ENCODE measurements at regions of chr7 and their contacts with region 1.

Region 1: GRCh38 chr7:123865517-123866117 is 20.6 kb downstream of the HYAL4 start:
- DNase-seq: peak; percentile 43 to 80 (median 57)
- H3K4me3 ChIP-seq: no peak overlapping the region
- H3K27ac ChIP-seq: no peak overlapping the region
- H3K4me1 ChIP-seq: no peaks in the 10 kb centered on the region
- H3K27me3 ChIP-seq: no peaks in the 10 kb centered on the region
- CTCF ChIP-seq: peak; percentile 69 to 81 (median 76)
- POLR2A ChIP-seq: no peak

Region 2: DNA sequence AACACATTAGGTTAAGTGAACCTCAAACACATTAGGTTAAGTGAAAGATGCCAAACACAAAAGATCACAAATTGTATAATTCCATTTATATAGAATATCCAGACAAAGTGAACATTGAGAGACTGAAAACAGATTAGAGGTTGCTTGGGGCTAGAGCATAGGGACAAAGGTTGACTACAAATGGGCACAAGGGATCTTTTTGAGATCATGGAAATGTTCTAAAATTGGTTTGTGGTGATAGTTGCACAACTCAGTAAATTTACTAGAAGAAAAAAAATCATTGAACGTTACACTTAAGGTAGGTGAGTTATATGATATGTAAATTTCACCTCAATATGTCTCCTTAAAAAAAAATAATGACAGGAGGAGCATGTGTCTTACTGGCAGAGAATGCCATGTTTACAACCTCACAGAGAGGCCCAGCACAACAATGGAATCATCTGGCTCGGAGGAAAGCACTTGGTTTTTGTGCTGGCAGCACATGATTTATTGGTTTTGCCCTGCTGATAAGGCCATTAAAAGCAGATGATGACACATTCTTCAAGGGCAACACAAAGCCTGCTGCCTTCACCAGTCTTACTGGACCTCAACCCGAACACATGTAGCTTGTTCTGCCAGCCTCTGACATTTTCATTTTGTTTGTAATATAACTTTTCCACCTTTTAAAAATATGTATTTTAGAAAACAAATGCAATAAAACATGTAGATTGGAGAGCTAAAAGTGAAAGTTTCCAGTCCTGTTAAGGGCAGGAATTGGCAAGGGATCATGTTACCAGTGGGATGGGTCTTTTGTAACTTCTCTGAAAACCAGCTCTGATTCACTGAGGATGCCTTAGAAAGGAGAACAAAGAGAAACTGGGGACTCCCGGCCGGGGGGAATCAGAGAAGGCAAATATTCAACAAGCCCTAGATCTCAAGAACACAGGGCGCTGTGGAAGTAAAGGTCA is 221.8 kb before region 1 on chr7:
- intact Hi-C with region 1: loop called in 1 of 2 experiments (anchors 5 kb)
- DNase-seq: peak; percentile 77 to 92 (median 89)
- H3K4me3 ChIP-seq: peak overlapping the region in 2 of 4 donors; percentile 7 to 30
- H3K27ac ChIP-seq: peak overlapping the region; percentile 18 to 84 (median 71)
- H3K4me1 ChIP-seq: peaks cover 22 to 25% of the 10 kb centered on the region in 2 donors
- H3K27me3 ChIP-seq: no peaks in the 10 kb centered on the region
- CTCF ChIP-seq: no peak
- POLR2A ChIP-seq: peak in 1 of 2 donors; percentile 81

Region 3: DNA sequence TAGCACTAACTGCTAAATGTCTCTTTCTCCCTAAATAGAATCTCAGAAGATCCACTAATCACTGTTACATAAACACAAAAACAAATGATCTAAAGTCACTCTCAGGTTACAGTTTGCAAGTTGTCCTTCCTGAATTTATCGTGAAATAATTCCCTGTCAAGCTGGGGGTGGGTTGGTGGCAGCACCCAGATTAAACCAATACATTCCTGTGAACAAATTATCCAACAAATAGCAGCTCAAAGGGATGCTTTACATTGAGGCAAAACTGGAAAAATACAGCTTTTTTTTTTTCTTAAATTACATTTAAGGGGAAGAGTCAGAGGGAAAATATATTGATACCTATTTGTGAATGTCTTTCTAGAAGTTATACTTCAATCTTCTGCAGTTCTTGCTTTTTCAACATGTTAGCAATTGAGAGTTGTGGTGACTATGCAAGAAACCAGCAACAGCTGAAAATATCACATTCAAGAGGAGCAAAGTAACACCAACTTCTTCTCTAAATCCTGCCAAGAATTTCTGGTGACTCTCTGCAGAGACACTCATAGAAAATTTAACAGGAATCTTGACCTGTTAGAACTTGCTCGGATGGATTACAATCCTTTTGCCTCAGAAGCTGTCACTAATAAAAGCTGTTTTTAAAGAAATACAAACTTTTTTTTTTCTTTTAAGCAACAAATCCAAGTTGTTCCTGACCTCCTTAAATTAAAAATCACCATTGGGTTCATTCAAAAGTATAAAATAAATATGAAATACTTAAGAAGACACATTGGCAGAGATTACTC is 191.0 kb before region 1 on chr7:
- intact Hi-C with region 1: loop called in 1 of 2 experiments (anchors 10 kb)
- DNase-seq: no peak
- H3K4me3 ChIP-seq: no peak overlapping the region
- H3K27ac ChIP-seq: no peak overlapping the region
- H3K4me1 ChIP-seq: peaks cover 0 to 16% of the 10 kb centered on the region in 2 donors
- H3K27me3 ChIP-seq: no peaks in the 10 kb centered on the region
- CTCF ChIP-seq: no peak
- POLR2A ChIP-seq: no peak

Region 4: GRCh38 chr7:123682690-123683089 is 182.9 kb before region 1 on chr7:
- intact Hi-C with region 1: loop called (anchors 10 kb)
- DNase-seq: peak in 3 of 7 donors; percentile 19 to 43 (median 25)
- H3K4me3 ChIP-seq: no peak overlapping the region
- H3K27ac ChIP-seq: no peak overlapping the region
- H3K4me1 ChIP-seq: peaks cover 13 to 14% of the 10 kb centered on the region in 2 donors
- H3K27me3 ChIP-seq: no peaks in the 10 kb centered on the region
- CTCF ChIP-seq: peak; percentile 38 to 71 (median 58)
- POLR2A ChIP-seq: no peak

Region 5: GRCh38 chr7:123792547-123792946 is 73.1 kb before region 1 on chr7:
- intact Hi-C with region 1: loop called (anchors 5 kb)
- DNase-seq: no peak
- H3K4me3 ChIP-seq: no peak overlapping the region
- H3K27ac ChIP-seq: no peak overlapping the region
- H3K4me1 ChIP-seq: peaks cover 7 to 10% of the 10 kb centered on the region in 2 donors
- H3K27me3 ChIP-seq: no peaks in the 10 kb centered on the region
- CTCF ChIP-seq: no peak
- POLR2A ChIP-seq: no peak

Region 6: GRCh38 chr7:123797673-123798527 is 67.7 kb before region 1 on chr7:
- intact Hi-C with region 1: loop called (anchors 5 kb)
- DNase-seq: no peak
- H3K4me3 ChIP-seq: no peak overlapping the region
- H3K27ac ChIP-seq: no peak overlapping the region
- H3K4me1 ChIP-seq: no peaks in the 10 kb centered on the region
- H3K27me3 ChIP-seq: no peaks in the 10 kb centered on the region
- CTCF ChIP-seq: peak; percentile 40 to 67 (median 60)
- POLR2A ChIP-seq: no peak